Activated B cell treated with CpG ODN at 0.5 μM for 24 hours (primary cell): ENCODE measurements at regions of chr2 and their contacts with region 1.

Region 1: DNA sequence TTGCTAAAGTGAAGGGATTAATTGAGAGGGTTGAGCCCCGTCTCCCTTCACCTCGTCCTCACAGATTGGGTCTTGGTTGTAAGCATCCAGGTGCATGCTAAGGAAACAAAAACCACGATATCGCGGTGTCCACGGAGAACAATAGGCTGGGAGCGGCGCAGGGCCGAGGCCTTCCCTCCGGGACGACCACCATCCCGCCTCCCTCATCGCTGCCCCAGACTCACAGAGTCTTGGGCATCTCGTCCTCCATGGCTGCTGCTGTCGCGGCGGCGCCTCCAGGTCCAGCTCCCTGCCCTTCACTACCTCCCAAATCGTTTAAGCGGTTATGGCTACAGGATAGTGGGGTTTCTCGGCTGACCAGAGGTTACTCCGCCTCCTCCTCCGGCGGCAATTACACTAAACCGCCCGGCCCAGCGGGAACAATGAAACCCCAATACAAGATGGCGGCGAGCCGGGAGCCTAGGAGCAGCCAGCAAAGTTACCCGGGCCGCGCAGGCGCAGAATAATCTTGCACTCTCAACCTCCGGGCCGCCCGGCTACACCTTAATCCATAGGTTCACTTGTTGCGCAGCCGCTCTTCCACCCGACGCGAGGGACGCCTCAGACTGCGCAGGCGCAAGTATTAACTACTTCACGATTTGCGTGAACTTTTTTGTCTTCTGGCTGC is at the start of gene TIA1:
- DNase-seq: peak; percentile 93
- ATAC-seq: peak; percentile 96
- H3K4me3 Mint-ChIP-seq: peak within 1 kb of the TSS; percentile 99
- H3K27ac Mint-ChIP-seq: peak within 1 kb of the TSS; percentile 99
- H3K4me1 Mint-ChIP-seq: peaks cover 44% of the 10 kb centered on the region
- H3K27me3 Mint-ChIP-seq: peaks cover 4% of the 10 kb centered on the region
- CTCF ChIP-seq: no peak
- total RNA-seq, gene TIA1: 129 and 149 TPM in 2 replicates

Region 2: GRCh38 chr2:69436938-69437750 is 811.2 kb before region 1 on chr2 and contains the start of gene NFU1:
- CTCF ChIA-PET with region 1: no interaction called
- POLR2A ChIA-PET with region 1: no interaction called
- intact Hi-C with region 1: loop called (anchors 1 kb)
- DNase-seq: peak; percentile 85
- ATAC-seq: peak; percentile 95
- H3K4me3 Mint-ChIP-seq: peak within 1 kb of the TSS; percentile 96
- H3K27ac Mint-ChIP-seq: peak within 1 kb of the TSS; percentile 93
- H3K4me1 Mint-ChIP-seq: peaks cover 34% of the 10 kb centered on the region
- H3K27me3 Mint-ChIP-seq: no peaks in the 10 kb centered on the region
- CTCF ChIP-seq: no peak
- total RNA-seq, gene NFU1: 24.3 and 31.1 TPM in 2 replicates

Region 3: DNA sequence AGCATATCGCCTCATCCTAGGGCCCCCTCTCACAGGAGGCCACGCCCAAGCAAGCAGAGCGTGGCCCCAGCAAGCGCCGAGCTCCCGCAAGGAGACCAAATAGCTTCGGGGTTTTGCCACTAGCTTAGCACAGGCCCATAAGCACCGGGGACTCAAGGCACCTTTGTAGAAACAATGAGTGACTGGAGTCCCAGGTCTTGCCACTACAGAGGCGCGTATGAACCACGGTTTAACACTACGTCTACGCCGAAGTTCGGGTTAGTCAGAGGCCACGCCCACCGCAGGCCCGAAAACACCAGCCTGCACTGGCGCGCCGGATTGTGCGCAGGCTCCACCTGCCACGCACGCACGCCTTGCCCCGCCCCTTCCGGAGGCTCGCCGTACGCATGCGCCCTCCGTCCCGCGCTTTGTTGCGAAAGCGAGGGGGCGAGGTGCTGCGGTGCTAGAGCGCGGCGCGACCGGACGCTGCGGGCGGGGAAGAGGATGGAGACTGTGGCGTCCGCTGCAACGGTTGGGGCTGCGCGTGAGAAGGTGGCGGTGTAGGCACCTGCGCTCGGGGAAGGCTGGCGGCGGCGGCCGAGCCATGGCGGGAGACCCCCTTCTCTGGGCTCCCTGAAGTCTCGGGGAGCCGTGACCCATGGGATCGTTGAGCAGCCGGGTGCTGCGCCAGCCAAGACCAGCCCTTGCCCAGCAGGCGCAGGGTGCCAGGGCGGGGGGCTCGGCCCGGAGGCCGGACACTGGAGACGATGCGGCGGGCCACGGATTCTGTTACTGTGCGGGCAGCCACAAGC is 418.9 kb before region 1 on chr2 and contains the start of gene GMCL1:
- CTCF ChIA-PET with region 1: no interaction called
- POLR2A ChIA-PET with region 1: no interaction called
- intact Hi-C with region 1: loop called (anchors 5 kb)
- DNase-seq: peak; percentile 99
- ATAC-seq: peak; percentile 95
- H3K4me3 Mint-ChIP-seq: peak within 1 kb of the TSS; percentile 94
- H3K27ac Mint-ChIP-seq: peak within 1 kb of the TSS; percentile 96
- H3K4me1 Mint-ChIP-seq: peaks cover 29% of the 10 kb centered on the region
- H3K27me3 Mint-ChIP-seq: no peaks in the 10 kb centered on the region
- CTCF ChIP-seq: no peak
- total RNA-seq, gene GMCL1: 8.0 and 13.0 TPM in 2 replicates

Region 4: GRCh38 chr2:69893684-69894551 is 354.4 kb before region 1 on chr2 and contains the start of gene SNRNP27:
- CTCF ChIA-PET with region 1: no interaction called
- POLR2A ChIA-PET with region 1: no interaction called
- intact Hi-C with region 1: loop called (anchors 1 kb)
- DNase-seq: peak; percentile 69
- ATAC-seq: peak; percentile 88
- H3K4me3 Mint-ChIP-seq: peak within 1 kb of the TSS; percentile 100
- H3K27ac Mint-ChIP-seq: peak within 1 kb of the TSS; percentile 98
- H3K4me1 Mint-ChIP-seq: peaks cover 43% of the 10 kb centered on the region
- H3K27me3 Mint-ChIP-seq: no peaks in the 10 kb centered on the region
- CTCF ChIP-seq: no peak
- total RNA-seq, gene SNRNP27: 43.0 and 49.1 TPM in 2 replicates

Region 5: GRCh38 chr2:70086838-70087701 is 161.2 kb before region 1 on chr2 and contains the start of gene PCBP1:
- CTCF ChIA-PET with region 1: no interaction called
- POLR2A ChIA-PET with region 1: no interaction called
- intact Hi-C with region 1: loop called (anchors 2 kb)
- DNase-seq: peak; percentile 96
- ATAC-seq: peak; percentile 54
- H3K4me3 Mint-ChIP-seq: peak within 1 kb of the TSS; percentile 96
- H3K27ac Mint-ChIP-seq: peak within 1 kb of the TSS; percentile 100
- H3K4me1 Mint-ChIP-seq: peaks cover 70% of the 10 kb centered on the region
- H3K27me3 Mint-ChIP-seq: no peaks in the 10 kb centered on the region
- CTCF ChIP-seq: no peak
- total RNA-seq, gene PCBP1: 370 and 379 TPM in 2 replicates

Region 6: DNA sequence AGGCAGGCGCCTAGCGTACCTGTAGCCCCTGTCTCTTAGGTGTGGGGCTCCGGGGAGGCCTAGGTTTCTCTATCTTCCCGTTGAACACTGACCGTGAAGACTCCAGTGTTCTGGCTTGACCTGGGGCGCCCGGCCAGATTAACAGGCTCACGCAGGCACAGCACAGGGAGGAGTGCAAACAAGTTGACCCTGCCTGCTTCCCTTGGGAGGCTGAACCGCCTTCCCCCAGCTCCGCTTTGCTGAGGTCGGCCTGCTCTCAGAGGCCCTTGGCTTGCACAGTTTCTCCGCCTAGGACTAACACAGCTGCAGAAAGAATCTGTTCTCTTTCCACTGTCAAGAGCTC is 10.2 kb after region 1 on chr2:
- CTCF ChIA-PET with region 1: interaction called, 6 read pairs
- POLR2A ChIA-PET with region 1: interaction called, 30 read pairs
- intact Hi-C with region 1: loop called (anchors 1 kb)
- DNase-seq: no peak
- ATAC-seq: no peak
- H3K4me3 Mint-ChIP-seq: peak overlapping the region; percentile 93
- H3K27ac Mint-ChIP-seq: peak overlapping the region; percentile 12
- H3K4me1 Mint-ChIP-seq: peaks cover 13% of the 10 kb centered on the region
- H3K27me3 Mint-ChIP-seq: no peaks in the 10 kb centered on the region
- CTCF ChIP-seq: no peak